Activated naive CD4-positive, alpha-beta T cell treated with anti-CD3 and anti-CD28 coated beads for 36 hours (primary cell): ENCODE measurements at regions of chr10 and their contacts with region 1.

Region 1: GRCh38 chr10:96586419-96587263 is at the start of gene TM9SF3:
- DNase-seq: peak; percentile 94
- H3K4me3 Mint-ChIP-seq: peak within 1 kb of the TSS; percentile 84
- H3K27ac Mint-ChIP-seq: peak within 1 kb of the TSS; percentile 88
- H3K4me1 Mint-ChIP-seq: peaks cover 32% of the 10 kb centered on the region
- H3K27me3 Mint-ChIP-seq: peaks cover 2% of the 10 kb centered on the region
- total RNA-seq, gene TM9SF3: 39.6 to 41.0 TPM

Region 2: GRCh38 chr10:95907456-95908253 is 679.0 kb before region 1 on chr10 and contains the start of gene CC2D2B:
- CTCF ChIA-PET with region 1: no interaction called
- intact Hi-C with region 1: loop called (anchors 10 kb)
- DNase-seq: peak; percentile 73
- H3K4me3 Mint-ChIP-seq: peak within 1 kb of the TSS; percentile 90
- H3K27ac Mint-ChIP-seq: peak within 1 kb of the TSS; percentile 89
- H3K4me1 Mint-ChIP-seq: peaks cover 14% of the 10 kb centered on the region
- H3K27me3 Mint-ChIP-seq: no peaks in the 10 kb centered on the region
- total RNA-seq, gene CC2D2B: not detected

Region 3: DNA sequence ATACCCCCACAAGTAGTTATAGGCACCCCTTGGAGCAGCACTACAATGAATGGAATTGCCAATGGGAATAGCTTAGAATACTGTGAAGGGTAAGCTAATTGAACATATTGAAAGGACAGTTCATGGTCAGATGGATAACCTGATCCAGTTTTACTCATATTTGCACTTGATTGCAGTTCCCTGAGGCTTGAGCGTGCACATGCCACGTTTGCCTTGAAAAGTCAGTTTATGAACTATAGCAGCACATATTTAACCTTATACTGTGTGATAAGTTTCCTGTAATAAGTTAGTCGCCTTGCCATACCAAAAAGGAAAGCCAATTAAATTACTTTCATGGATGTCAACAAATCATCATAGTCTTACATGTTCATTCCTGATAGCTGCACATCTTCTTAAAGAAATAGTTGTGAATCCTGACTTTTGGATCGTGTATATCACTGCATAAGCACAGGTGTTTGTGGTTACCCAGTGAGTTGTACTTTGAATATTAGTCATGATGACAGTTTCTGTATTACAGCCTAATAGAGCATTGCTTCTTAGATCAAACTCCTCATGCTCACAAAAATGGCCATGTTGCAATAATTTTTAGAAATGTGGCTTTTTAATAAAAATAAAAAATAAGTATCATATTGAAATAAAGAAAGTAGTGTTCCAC is 260.8 kb before region 1 on chr10:
- CTCF ChIA-PET with region 1: no interaction called
- intact Hi-C with region 1: no loop called
- DNase-seq: no peak
- H3K4me3 Mint-ChIP-seq: no peak overlapping the region
- H3K27ac Mint-ChIP-seq: no peak overlapping the region
- H3K4me1 Mint-ChIP-seq: peaks cover 4% of the 10 kb centered on the region
- H3K27me3 Mint-ChIP-seq: peaks cover 5% of the 10 kb centered on the region

Region 4: GRCh38 chr10:96374985-96375830 is 211.4 kb before region 1 on chr10:
- CTCF ChIA-PET with region 1: no interaction called
- intact Hi-C with region 1: loop called (anchors 1 kb)
- DNase-seq: peak; percentile 89
- H3K4me3 Mint-ChIP-seq: peak overlapping the region; percentile 74
- H3K27ac Mint-ChIP-seq: no peak overlapping the region
- H3K4me1 Mint-ChIP-seq: peaks cover 6% of the 10 kb centered on the region
- H3K27me3 Mint-ChIP-seq: peaks cover 3% of the 10 kb centered on the region

Region 5: DNA sequence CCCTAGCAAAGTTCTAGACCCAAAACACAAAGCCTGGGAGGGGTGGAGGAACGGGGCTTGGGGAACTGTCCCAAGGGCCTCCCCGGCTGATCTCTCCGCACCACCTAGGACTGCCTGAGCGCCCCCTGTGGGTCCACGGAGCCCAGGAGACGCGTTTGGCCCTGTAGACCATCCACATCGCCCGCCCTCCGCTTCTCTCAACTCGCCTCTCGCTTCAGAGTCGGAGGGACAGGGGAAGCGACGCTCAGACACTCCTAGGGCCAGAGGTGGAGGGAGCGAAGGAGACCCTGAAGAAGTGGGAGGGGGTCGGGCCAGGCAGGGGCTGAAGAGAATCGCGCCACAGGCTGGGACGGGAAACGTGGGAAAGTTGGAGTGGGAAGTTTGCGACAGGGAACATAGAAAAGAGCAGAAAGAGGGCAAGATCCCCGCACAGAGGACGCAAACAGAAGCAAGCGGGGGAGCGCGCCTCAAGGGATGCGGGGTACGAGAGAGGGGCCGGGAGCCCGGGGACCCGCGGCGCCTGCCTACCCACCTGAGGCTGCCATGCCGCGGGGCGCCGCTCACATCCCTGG is 133.3 kb after region 1 on chr10:
- CTCF ChIA-PET with region 1: no interaction called
- intact Hi-C with region 1: loop called (anchors 2 kb)
- DNase-seq: peak; percentile 64
- H3K4me3 Mint-ChIP-seq: peak overlapping the region; percentile 84
- H3K27ac Mint-ChIP-seq: peak overlapping the region; percentile 22
- H3K4me1 Mint-ChIP-seq: peaks cover 6% of the 10 kb centered on the region
- H3K27me3 Mint-ChIP-seq: peaks cover 3% of the 10 kb centered on the region

Region 6: DNA sequence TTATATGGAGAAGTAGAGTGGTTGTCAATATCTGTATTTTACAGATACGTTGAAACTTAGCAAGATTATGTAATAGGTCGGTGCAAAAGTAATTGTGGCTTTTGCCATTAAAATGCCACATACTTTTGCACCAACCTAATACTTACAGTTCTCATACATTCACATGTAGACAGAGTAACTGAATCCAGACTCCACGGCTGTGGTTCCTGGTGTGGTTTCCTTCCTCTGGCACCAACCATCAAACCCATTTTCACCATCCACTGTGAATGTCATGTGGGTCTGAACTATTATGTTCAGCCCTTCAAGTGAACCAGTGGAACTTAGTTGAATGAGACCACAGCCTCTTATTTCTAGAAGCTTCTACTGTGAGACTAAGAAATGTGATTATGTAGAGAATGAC is 630.7 kb after region 1 on chr10:
- CTCF ChIA-PET with region 1: no interaction called
- intact Hi-C with region 1: loop called (anchors 5 kb)
- DNase-seq: no peak
- H3K4me3 Mint-ChIP-seq: no peak overlapping the region
- H3K27ac Mint-ChIP-seq: no peak overlapping the region
- H3K4me1 Mint-ChIP-seq: peaks cover 31% of the 10 kb centered on the region
- H3K27me3 Mint-ChIP-seq: no peaks in the 10 kb centered on the region

Region 7: DNA sequence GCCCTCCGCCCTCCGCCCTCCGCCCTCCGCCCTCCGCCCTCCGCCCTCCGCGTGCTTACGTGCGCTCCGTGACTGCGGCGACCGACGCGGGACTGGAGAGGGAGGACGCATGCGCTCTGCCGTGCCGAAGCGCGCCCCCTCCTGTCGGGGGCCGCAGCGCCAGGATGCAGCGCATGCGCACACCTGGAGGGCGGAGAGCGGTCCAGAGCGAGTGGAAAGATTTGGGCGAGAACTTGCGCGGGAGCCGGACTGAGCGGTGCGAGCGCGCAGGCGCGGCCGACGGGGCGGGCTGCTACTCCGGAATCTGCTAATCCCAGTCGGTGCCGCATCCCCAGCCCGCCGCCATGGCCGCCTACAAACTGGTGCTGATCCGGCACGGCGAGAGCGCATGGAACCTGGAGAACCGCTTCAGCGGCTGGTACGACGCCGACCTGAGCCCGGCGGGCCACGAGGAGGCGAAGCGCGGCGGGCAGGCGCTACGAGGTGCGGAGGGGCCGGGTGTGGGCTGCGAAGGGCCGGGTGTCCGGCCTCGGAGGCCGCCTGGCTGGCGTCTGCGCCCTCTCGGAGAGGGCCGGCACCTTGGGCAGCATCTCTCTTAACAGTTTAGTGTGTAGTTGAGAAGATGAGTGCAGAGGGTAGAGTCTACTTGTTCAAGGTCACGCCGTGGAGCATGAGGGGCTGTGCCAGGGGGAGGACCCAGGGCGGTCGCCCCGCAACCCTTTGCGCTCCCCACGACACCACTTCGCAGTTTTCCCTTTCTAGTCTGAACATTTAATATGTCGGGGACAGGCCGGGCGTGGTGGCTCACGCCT is 839.5 kb after region 1 on chr10 and contains the start of gene PGAM1:
- CTCF ChIA-PET with region 1: no interaction called
- intact Hi-C with region 1: loop called (anchors 5 kb)
- DNase-seq: peak; percentile 95
- H3K4me3 Mint-ChIP-seq: peak within 1 kb of the TSS; percentile 90
- H3K27ac Mint-ChIP-seq: peak within 1 kb of the TSS; percentile 98
- H3K4me1 Mint-ChIP-seq: peaks cover 50% of the 10 kb centered on the region
- H3K27me3 Mint-ChIP-seq: no peaks in the 10 kb centered on the region
- total RNA-seq, gene PGAM1: 1,371 to 1,393 TPM